ENCODE measurements at regions of chr13 and their contacts with region 1.

Region 1: GRCh38 chr13:23321535-23322241 is 111.8 kb downstream of the SACS start:
- DNase-seq: peak; percentile 92
- H3K4me3 ChIP-seq: peak overlapping the region in 1 of 3 experiments; percentile 30
- H3K27ac ChIP-seq: peak overlapping the region; percentile 98
- H3K4me1 ChIP-seq: peaks cover 41% of the 10 kb centered on the region
- H3K27me3 ChIP-seq: no peaks in the 10 kb centered on the region
- CTCF ChIP-seq: no peak
- POLR2A ChIP-seq: no peak

Region 2: DNA sequence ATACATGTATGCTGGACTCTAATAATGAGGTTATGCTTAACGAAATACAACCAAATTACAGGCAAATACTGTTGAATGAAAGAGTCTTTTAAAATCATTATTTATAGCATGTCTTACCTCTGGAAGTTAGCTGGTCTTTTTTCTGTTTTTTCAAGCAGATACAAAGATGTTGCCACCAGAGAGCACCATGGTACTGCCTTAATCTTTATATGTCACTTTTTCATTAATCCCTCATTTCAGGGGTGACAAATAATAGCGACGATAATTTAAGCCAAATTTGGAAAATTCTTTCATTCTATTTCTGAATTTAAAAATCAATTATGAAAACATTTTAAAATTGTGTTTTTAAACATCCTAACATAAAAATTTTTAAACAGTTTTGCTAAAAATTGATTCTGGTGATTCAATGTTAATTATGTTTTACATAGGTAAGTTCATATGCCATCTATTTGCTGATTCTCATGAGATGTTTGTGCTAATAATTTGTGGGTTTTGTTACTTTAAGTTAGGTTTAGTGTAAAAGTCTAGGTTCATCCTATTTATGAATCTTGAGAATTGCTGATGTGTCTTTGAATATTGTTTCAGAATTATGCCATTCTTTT is 520.2 kb before region 1 on chr13:
- CTCF ChIA-PET with region 1: no interaction called
- POLR2A ChIA-PET with region 1: no interaction called
- dilution Hi-C with region 1: no loop called
- intact Hi-C with region 1: loop called (anchors 5 kb)
- DNase-seq: peak; percentile 15
- H3K4me3 ChIP-seq: no peak overlapping the region
- H3K27ac ChIP-seq: no peak overlapping the region
- H3K4me1 ChIP-seq: no peaks in the 10 kb centered on the region
- H3K27me3 ChIP-seq: no peaks in the 10 kb centered on the region
- CTCF ChIP-seq: no peak
- POLR2A ChIP-seq: no peak

Region 3: GRCh38 chr13:22960827-22961226 is 360.9 kb before region 1 on chr13:
- CTCF ChIA-PET with region 1: no interaction called
- POLR2A ChIA-PET with region 1: no interaction called
- dilution Hi-C with region 1: no loop called
- intact Hi-C with region 1: no loop called
- DNase-seq: no peak
- H3K4me3 ChIP-seq: no peak overlapping the region
- H3K27ac ChIP-seq: no peak overlapping the region
- H3K4me1 ChIP-seq: no peaks in the 10 kb centered on the region
- H3K27me3 ChIP-seq: no peaks in the 10 kb centered on the region
- CTCF ChIP-seq: no peak
- POLR2A ChIP-seq: no peak

Region 4: DNA sequence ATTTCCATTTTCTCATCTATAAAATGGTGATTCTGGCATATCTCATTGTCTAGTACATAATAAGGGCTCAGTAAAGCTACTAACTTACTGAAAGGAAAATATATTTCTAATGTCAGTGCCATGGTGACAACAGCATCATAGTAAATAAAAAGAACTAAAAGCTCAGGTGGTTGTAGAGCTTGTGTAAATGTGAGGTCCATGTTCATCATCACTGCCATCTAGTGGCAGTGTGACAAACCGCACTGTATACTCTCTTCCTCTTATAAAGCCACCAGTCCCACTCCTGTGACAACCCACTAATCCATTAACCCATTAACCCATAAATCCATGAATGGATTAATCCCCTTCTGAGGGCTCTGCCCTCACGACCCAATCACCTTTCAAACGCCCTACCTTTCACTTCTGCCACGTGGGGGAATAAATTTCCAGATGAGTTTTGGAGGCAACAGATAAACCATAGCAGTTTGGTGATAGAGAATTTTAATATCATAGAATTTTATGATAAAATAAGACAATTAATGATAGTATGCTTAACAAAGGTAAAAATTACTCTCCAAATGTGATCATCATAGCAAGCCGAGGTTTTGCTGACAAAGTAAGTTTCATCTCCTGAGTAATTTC is 301.4 kb before region 1 on chr13:
- CTCF ChIA-PET with region 1: no interaction called
- POLR2A ChIA-PET with region 1: no interaction called
- dilution Hi-C with region 1: no loop called
- intact Hi-C with region 1: loop called (anchors 1 kb)
- DNase-seq: peak; percentile 58
- H3K4me3 ChIP-seq: no peak overlapping the region
- H3K27ac ChIP-seq: no peak overlapping the region
- H3K4me1 ChIP-seq: no peaks in the 10 kb centered on the region
- H3K27me3 ChIP-seq: no peaks in the 10 kb centered on the region
- CTCF ChIP-seq: peak; percentile 71 to 81
- POLR2A ChIP-seq: no peak

Region 5: GRCh38 chr13:23087880-23088279 is 233.8 kb before region 1 on chr13:
- CTCF ChIA-PET with region 1: no interaction called
- POLR2A ChIA-PET with region 1: no interaction called
- dilution Hi-C with region 1: no loop called
- intact Hi-C with region 1: loop called (anchors 10 kb)
- DNase-seq: no peak
- H3K4me3 ChIP-seq: no peak overlapping the region
- H3K27ac ChIP-seq: no peak overlapping the region
- H3K4me1 ChIP-seq: no peaks in the 10 kb centered on the region
- H3K27me3 ChIP-seq: no peaks in the 10 kb centered on the region
- CTCF ChIP-seq: peak; percentile 25 to 34
- POLR2A ChIP-seq: no peak

Region 6: DNA sequence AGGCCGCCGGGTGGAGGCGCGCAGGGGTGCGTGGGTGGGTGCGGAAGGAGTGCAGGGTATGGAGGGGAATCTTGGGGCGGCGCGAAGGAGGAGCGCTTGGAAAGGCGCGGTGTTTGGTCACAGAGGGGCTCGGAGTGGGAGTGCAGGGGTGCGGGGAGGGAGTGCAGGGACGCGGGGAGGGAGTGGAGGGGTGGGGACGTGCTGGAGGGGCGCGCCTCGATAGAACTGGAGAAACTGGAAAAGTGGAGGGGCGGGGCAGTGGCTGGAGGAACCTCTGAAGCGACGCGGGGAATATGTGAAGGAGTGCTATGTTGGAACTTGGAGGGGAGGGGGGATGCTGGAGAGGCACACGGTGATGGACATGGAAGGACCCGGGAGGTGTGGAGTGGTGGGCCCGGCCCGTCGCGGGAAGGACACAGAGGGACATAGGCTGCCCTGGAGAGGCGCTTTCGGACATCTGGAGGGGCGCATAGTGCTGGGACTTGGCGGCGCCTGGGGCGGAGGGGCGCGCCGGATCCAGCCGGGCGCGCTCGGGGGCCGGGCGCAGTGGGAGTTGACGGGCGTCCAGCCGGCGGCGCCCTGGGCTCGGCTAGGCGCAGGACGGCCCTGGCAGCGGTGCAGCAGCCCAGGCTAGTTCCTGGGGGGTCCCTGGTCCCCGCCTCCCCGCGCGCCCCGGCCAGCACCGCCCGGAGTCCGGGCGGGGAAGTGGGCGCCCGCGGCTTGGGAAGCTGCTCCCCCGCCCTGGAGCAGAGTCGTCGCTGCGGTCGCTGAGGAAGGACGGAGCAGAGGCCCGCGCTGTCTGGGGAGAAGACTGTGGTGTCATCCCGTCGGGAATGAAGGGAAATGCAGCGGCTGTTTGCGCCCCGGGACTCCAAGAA is 161.7 kb before region 1 on chr13:
- CTCF ChIA-PET with region 1: no interaction called
- POLR2A ChIA-PET with region 1: no interaction called
- dilution Hi-C with region 1: no loop called
- intact Hi-C with region 1: loop called (anchors 2 kb)
- DNase-seq: no peak
- H3K4me3 ChIP-seq: no peak overlapping the region
- H3K27ac ChIP-seq: no peak overlapping the region
- H3K4me1 ChIP-seq: peaks cover 3% of the 10 kb centered on the region
- H3K27me3 ChIP-seq: peaks cover 0 to 20% of the 10 kb centered on the region in 2 experiments
- CTCF ChIP-seq: no peak
- POLR2A ChIP-seq: no peak

Region 7: DNA sequence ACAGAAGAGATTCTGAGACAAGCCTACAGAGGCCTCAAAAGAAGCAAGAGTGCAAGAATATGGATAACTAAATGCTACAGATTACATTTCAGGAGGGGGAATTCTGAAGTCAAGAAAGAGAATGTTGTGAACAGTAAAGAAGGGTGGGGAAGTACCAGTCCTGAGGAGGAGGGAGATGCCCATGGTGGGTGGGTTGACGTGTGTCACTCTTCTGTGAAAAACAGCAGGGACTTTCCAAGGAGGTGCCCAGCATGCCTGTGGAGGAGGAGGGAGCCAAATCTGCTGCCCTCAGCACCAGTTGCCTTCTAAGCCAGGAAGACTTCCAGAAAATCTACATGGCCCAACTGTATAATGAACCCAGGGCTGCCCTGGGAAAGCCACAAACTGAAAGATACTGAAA is 53.2 kb before region 1 on chr13:
- CTCF ChIA-PET with region 1: no interaction called
- POLR2A ChIA-PET with region 1: no interaction called
- dilution Hi-C with region 1: no loop called
- intact Hi-C with region 1: no loop called
- DNase-seq: no peak
- H3K4me3 ChIP-seq: no peak overlapping the region
- H3K27ac ChIP-seq: no peak overlapping the region
- H3K4me1 ChIP-seq: no peaks in the 10 kb centered on the region
- H3K27me3 ChIP-seq: no peaks in the 10 kb centered on the region
- CTCF ChIP-seq: no peak
- POLR2A ChIP-seq: no peak

Region 8: GRCh38 chr13:23427342-23427843 is 105.7 kb after region 1 on chr13:
- CTCF ChIA-PET with region 1: no interaction called
- POLR2A ChIA-PET with region 1: interaction called, 3 read pairs
- dilution Hi-C with region 1: no loop called
- intact Hi-C with region 1: loop called (anchors 2 kb)
- DNase-seq: peak; percentile 96
- H3K4me3 ChIP-seq: peak overlapping the region in 1 of 3 experiments; percentile 3
- H3K27ac ChIP-seq: peak overlapping the region; percentile 96
- H3K4me1 ChIP-seq: peaks cover 27% of the 10 kb centered on the region
- H3K27me3 ChIP-seq: no peaks in the 10 kb centered on the region
- CTCF ChIP-seq: no peak
- POLR2A ChIP-seq: no peak

Region 9: GRCh38 chr13:23888658-23889614 is 567.2 kb after region 1 on chr13 and contains the start of gene MIPEP:
- CTCF ChIA-PET with region 1: no interaction called
- POLR2A ChIA-PET with region 1: no interaction called
- dilution Hi-C with region 1: no loop called
- intact Hi-C with region 1: loop called (anchors 5 kb)
- DNase-seq: peak; percentile 97
- H3K4me3 ChIP-seq: peak within 1 kb of the TSS; percentile 61 to 69 (median 61)
- H3K27ac ChIP-seq: peak within 1 kb of the TSS; percentile 50
- H3K4me1 ChIP-seq: peaks cover 10% of the 10 kb centered on the region
- H3K27me3 ChIP-seq: no peaks in the 10 kb centered on the region
- CTCF ChIP-seq: peak; percentile 78 to 84
- POLR2A ChIP-seq: no peak
- total RNA-seq, gene MIPEP: 16.2 and 19.2 TPM in 2 replicates

Measured in endothelial cell of umbilical vein (primary cell).